ENCODE measurements at regions of chr6 and their contacts with region 1.

Region 1: GRCh38 chr6:130322673-130323268 is 43.0 kb upstream of the TMEM200A start:
- DNase-seq: peak; percentile 31 to 39
- ATAC-seq: peak; percentile 61

Region 2: GRCh38 chr6:130282234-130282995 is 40.4 kb before region 1 on chr6:
- intact Hi-C with region 1: no loop called
- DNase-seq: peak in 1 of 2 donors; percentile 7
- ATAC-seq: peak; percentile 61

Region 3: DNA sequence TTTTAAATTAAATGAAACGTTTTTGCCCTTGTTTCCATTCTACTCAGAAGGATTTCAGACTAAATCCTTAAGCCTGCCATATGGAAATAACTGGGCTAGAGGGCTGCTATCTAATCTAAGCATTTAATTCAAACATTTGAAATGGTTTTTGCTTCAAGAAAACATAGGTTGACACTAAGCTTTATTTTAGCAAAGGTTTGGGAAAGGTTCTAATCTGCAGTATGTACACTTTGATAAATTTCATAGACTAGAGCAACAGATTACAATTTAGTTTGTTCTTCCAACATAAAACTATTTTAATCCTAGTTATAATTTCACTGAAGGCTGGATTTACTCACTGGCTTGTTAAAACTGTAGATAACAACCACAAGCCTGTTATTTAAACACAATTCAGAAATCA is 115.2 kb after region 1 on chr6:
- intact Hi-C with region 1: no loop called
- DNase-seq: no peak
- ATAC-seq: no peak

Region 4: DNA sequence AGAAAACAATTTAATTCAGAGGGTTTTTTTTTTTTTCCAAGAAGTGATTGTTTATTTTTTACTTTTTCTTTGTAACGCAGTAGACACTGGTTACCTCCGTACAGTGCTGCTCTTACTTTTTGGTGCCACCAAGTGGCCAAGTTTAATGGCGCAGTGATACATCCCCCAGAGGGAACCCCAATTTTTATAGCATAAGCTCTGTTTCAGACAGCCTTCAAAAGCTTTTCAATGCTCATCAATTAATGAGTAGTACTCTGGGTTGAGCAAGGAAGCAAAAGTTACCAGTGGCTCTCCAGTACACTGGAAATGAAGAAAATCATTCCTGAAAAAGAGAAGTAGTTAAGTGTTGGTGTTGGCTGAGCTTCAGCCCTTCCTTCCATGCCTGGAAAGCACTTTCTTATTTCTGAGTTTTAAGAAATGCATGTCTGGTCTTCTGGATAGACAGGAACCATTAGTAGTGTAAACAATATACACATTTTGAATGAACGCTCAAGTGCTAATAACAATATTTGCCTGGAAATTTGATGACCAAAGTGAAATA is 375.3 kb after region 1 on chr6:
- intact Hi-C with region 1: loop called in 1 of 2 experiments (anchors 10 kb)
- DNase-seq: peak in 1 of 2 donors; percentile 49
- ATAC-seq: peak; percentile 69

Region 5: DNA sequence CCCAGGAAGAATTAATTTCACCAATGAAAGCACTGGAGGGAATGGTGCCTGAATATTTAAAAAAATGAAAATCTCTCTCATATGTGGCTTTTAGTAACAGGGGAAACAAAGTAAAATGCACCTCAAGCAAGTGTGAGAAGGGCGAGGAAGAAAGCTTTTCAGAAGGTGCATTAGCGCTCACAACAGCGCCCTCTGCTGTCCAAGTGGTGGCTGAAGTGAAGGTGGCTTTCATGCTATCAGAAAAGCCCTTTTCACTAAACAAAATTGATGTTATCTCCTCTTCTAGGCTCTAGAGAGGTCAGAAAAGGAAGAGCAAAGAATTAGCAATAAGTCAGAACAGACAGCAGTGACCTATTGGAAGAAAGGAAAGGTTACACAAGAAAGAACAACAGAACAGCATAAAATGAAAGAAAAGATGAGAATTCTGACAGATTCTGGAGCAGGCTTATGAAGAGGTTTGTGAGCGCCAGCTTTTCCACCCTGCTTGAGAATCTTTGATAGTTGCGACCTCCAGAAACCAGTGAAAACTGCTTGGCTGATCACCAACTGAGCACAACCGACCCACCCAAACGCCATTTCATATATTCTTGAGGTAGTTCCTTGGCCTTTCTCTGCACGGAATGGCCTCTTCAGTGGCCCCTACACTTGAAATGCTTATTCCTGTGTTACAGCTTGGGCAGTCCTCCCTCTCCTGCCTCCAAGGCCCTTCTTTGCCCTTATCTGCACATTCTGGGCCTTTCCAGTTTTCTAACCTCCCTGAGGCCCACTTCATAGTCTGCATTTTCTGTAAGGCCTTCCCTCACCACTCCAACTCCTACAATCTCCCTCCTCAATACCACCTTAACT is 549.7 kb after region 1 on chr6:
- intact Hi-C with region 1: loop called in 1 of 2 experiments (anchors 5 kb)
- DNase-seq: peak; percentile 36 to 89
- ATAC-seq: peak; percentile 63